OCI-LY7 (cell line): ENCODE measurements at regions of chr7 and their contacts with region 1.

Region 1: DNA sequence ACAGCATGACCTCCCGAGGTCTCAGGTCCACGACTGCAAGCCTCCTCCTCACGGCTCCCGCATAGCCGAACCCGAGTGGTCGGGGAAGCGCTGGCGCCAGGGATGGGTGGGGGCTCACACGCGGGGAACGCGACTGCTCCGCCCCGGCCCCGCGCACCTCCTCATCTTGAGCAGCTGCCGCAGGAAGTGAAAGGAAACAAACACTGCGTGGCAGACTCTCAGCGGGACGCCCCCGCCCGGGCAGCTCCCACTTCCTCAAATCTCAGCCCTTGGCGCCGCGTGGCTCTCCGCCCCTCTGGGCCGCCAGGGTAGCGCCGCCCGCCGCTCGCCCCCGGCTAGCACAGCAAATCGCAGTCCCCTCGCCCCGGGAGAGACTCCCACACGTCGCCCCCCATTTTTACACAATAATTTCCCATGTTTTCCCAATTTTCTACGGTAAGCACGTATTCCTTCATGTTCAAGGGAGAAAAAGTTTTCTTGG is at the start of gene TMEM243:
- DNase-seq: peak; percentile 92
- H3K4me3 ChIP-seq: peak within 1 kb of the TSS; percentile 82
- H3K27ac ChIP-seq: peak within 1 kb of the TSS; percentile 98
- H3K4me1 ChIP-seq: peaks cover 41% of the 10 kb centered on the region
- CTCF ChIP-seq: peak; percentile 67
- total RNA-seq, gene TMEM243: 116 and 126 TPM in 2 replicates

Region 2: GRCh38 chr7:87059525-87060287 is 159.9 kb before region 1 on chr7 and contains the start of gene ELAPOR2:
- CTCF ChIA-PET with region 1: no interaction called
- POLR2A ChIA-PET with region 1: no interaction called
- intact Hi-C with region 1: loop called (anchors 5 kb)
- DNase-seq: peak; percentile 87
- H3K4me3 ChIP-seq: peak within 1 kb of the TSS; percentile 85
- H3K27ac ChIP-seq: peak within 1 kb of the TSS; percentile 5
- H3K4me1 ChIP-seq: peaks cover 17% of the 10 kb centered on the region
- CTCF ChIP-seq: peak; percentile 70
- total RNA-seq, gene ELAPOR2: 4.1 and 4.6 TPM in 2 replicates

Region 3: GRCh38 chr7:87159538-87159937 is 60.0 kb before region 1 on chr7:
- CTCF ChIA-PET with region 1: interaction called, 5 read pairs
- POLR2A ChIA-PET with region 1: interaction called, 192 read pairs
- intact Hi-C with region 1: no loop called
- DNase-seq: peak; percentile 16
- H3K4me3 ChIP-seq: peak overlapping the region; percentile 5
- H3K27ac ChIP-seq: peak overlapping the region; percentile 14
- H3K4me1 ChIP-seq: peaks cover 56% of the 10 kb centered on the region
- CTCF ChIP-seq: no peak

Region 4: GRCh38 chr7:87199700-87200450 is 19.7 kb before region 1 on chr7:
- CTCF ChIA-PET with region 1: no interaction called
- POLR2A ChIA-PET with region 1: interaction called, 36 read pairs
- intact Hi-C with region 1: loop called (anchors 1 kb)
- DNase-seq: no peak
- H3K4me3 ChIP-seq: no peak overlapping the region
- H3K27ac ChIP-seq: no peak overlapping the region
- H3K4me1 ChIP-seq: no peaks in the 10 kb centered on the region
- CTCF ChIP-seq: no peak

Region 5: DNA sequence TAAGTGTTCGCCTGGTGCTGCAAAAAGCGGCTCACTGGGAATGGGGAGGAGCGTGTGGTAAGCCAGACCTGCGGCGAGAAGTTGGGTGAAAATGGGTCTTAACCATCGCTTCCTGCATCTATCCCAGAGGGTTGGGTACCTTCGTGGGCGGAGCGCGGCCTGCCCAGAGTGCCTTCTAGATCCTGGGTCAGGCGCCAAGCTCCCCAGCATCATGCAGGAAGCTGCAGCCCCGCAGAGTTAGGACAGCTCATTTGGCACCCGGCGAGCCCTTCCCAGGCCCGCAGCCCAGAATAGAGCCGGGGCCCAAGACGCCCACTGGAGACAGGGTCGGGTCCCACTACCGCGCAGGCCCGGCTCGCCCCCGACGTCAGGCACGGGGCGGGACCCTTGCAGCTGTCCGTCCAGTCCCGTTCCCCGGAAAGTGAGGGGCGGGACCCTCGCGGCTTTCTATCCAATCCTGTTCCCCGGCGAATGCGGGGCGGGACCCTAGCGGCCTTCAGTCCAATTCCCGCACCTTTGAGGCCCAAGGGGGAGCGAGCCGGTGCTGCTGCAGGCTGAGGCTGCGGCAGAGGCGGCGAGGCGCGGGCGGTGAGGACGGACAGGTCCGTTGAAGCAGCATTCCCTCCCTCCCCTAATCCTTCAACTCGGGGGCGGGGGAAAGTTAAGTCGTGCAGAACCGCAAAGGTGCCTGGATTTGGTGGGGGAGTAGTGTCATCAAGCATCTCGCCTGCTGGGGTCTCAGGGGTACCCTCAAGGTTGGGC is 125.8 kb after region 1 on chr7 and contains the start of gene CROT:
- CTCF ChIA-PET with region 1: no interaction called
- POLR2A ChIA-PET with region 1: interaction called, 5 read pairs
- intact Hi-C with region 1: loop called (anchors 2 kb)
- DNase-seq: peak; percentile 95
- H3K4me3 ChIP-seq: peak within 1 kb of the TSS; percentile 74
- H3K27ac ChIP-seq: peak within 1 kb of the TSS; percentile 57
- H3K4me1 ChIP-seq: peaks cover 30% of the 10 kb centered on the region
- CTCF ChIP-seq: no peak
- total RNA-seq, gene CROT: 3.0 and 5.2 TPM in 2 replicates

Region 6: GRCh38 chr7:87615197-87615596 is 395.6 kb after region 1 on chr7:
- CTCF ChIA-PET with region 1: no interaction called
- POLR2A ChIA-PET with region 1: no interaction called
- intact Hi-C with region 1: no loop called
- DNase-seq: no peak
- H3K4me3 ChIP-seq: no peak overlapping the region
- H3K27ac ChIP-seq: no peak overlapping the region
- H3K4me1 ChIP-seq: no peaks in the 10 kb centered on the region
- CTCF ChIP-seq: no peak

Region 7: GRCh38 chr7:87876040-87876868 is 656.7 kb after region 1 on chr7 and contains the starts of genes DBF4 and SLC25A40:
- CTCF ChIA-PET with region 1: no interaction called
- POLR2A ChIA-PET with region 1: interaction called, 4 read pairs
- intact Hi-C with region 1: loop called (anchors 1 kb)
- DNase-seq: peak; percentile 96
- H3K4me3 ChIP-seq: peak within 1 kb of the TSS; percentile 94
- H3K27ac ChIP-seq: peak within 1 kb of the TSS; percentile 99
- H3K4me1 ChIP-seq: peaks cover 29% of the 10 kb centered on the region
- CTCF ChIP-seq: no peak
- total RNA-seq, gene DBF4: 83.9 and 99.2 TPM in 2 replicates
- total RNA-seq, gene SLC25A40: 21.0 and 22.0 TPM in 2 replicates